PC-3 (cell line): ENCODE measurements at regions of chr11 and their contacts with region 1.

Region 1: GRCh38 chr11:113305440-113306336 is 8.7 kb upstream of the TTC12 start:
- DNase-seq: peak; percentile 90
- ATAC-seq: peak; percentile 100
- H3K4me3 ChIP-seq: no peak overlapping the region
- H3K27ac ChIP-seq: no peak overlapping the region
- H3K4me1 ChIP-seq: 0 out of 2 replicates have a peak, but pooled peaks cover 4% of the 10 kb centered on the region
- H3K27me3 ChIP-seq: peaks cover 3% of the 10 kb centered on the region; the same call in 1 of the 2 replicates
- CTCF ChIP-seq: peak; percentile 99

Region 2: DNA sequence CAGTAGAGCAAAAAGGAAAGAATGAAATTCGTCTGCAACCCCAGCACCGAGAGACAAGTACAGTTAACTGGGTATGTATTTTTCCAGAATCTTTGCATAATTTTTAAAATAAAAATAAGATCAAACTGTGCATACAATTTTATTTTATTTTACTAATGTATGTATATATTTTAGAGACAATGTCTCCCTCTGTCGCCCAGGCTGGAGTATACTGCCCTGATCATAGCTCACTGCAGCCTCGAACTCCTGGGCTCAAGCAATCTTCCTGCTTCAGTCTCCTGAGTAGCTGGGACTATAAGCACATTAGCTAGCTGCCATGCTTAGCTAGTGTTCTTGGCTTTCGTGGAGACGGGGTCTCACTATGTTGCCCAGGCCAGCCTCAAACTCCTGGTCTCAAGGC is 188.3 kb after region 1 on chr11:
- CTCF ChIA-PET with region 1: no interaction called
- POLR2A ChIA-PET with region 1: no interaction called
- intact Hi-C with region 1: loop called (anchors 1 kb)
- DNase-seq: peak; percentile 39
- ATAC-seq: peak; percentile 48; the same call in 1 of the 2 replicates
- H3K4me3 ChIP-seq: no peak overlapping the region
- H3K27ac ChIP-seq: no peak overlapping the region
- H3K4me1 ChIP-seq: peaks cover 11% of the 10 kb centered on the region
- H3K27me3 ChIP-seq: peaks cover 18% of the 10 kb centered on the region; the same call in 1 of the 2 replicates
- CTCF ChIP-seq: peak; percentile 54

Region 3: DNA sequence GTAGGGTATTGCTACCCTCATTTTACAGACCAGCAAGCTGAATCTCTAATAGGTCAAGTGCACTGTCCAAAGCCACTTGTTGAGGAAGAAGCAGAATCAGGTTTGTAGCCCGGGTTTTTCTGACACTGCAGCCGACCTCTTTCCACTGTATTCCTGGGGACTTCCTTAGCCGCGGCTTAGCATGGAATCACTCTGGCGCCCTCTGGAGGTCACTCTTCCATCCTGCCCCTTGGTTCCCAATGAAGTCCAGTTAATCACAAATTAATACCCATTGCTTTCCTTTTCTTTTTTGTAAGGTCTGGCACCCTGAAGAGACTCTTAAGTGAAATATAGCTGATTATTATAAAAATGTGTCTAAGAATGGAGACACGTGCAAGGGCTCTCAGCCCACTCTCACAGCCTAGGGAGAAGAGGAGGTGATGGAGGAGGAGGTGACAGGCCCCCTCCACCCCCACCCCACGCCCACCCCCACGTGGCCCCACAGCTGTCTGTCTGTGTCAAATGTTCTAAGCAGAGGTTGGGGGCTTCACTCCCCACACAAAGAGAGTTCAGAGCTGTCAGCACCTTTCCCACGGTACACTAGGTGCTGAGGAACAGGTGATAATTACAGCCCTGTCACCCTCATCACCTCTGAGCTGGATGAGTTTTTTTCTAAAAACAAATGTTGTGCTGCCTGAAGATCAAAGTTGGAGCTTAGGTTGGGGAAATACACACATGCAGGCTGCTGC is 227.2 kb after region 1 on chr11:
- CTCF ChIA-PET with region 1: no interaction called
- POLR2A ChIA-PET with region 1: no interaction called
- intact Hi-C with region 1: loop called (anchors 1 kb)
- DNase-seq: peak; percentile 90
- ATAC-seq: peak; percentile 93
- H3K4me3 ChIP-seq: no peak overlapping the region
- H3K27ac ChIP-seq: no peak overlapping the region
- H3K4me1 ChIP-seq: no peaks in the 10 kb centered on the region
- H3K27me3 ChIP-seq: 0 out of 2 replicates have a peak, but pooled peaks cover 4% of the 10 kb centered on the region
- CTCF ChIP-seq: peak; percentile 95

Region 4: GRCh38 chr11:113730887-113731726 is 425.4 kb after region 1 on chr11:
- CTCF ChIA-PET with region 1: no interaction called
- POLR2A ChIA-PET with region 1: no interaction called
- intact Hi-C with region 1: loop called (anchors 1 kb)
- DNase-seq: peak; percentile 83
- ATAC-seq: peak; percentile 87
- H3K4me3 ChIP-seq: no peak overlapping the region
- H3K27ac ChIP-seq: no peak overlapping the region
- H3K4me1 ChIP-seq: peaks cover under 1% of the 10 kb centered on the region; the same call in 1 of the 2 replicates
- H3K27me3 ChIP-seq: no peaks in the 10 kb centered on the region
- CTCF ChIP-seq: peak; percentile 93

Region 5: GRCh38 chr11:113796663-113797259 is 491.1 kb after region 1 on chr11:
- CTCF ChIA-PET with region 1: no interaction called
- POLR2A ChIA-PET with region 1: no interaction called
- intact Hi-C with region 1: loop called (anchors 1 kb)
- DNase-seq: peak; percentile 74
- ATAC-seq: peak; percentile 99
- H3K4me3 ChIP-seq: no peak overlapping the region
- H3K27ac ChIP-seq: no peak overlapping the region
- H3K4me1 ChIP-seq: no peaks in the 10 kb centered on the region
- H3K27me3 ChIP-seq: no peaks in the 10 kb centered on the region
- CTCF ChIP-seq: peak; percentile 82